ENCODE measurements at regions of chr5 and their contacts with region 1.

Region 1: GRCh38 chr5:102715082-102715819 is 39.9 kb upstream of the PAM start:
- DNase-seq: peak; percentile 77
- H3K4me3 ChIP-seq: no peak overlapping the region
- H3K27ac ChIP-seq: no peak overlapping the region
- H3K4me1 ChIP-seq: peaks cover 15% of the 10 kb centered on the region
- H3K27me3 ChIP-seq: no peaks in the 10 kb centered on the region
- CTCF ChIP-seq: no peak
- POLR2A ChIP-seq: no peak

Region 2: GRCh38 chr5:102731704-102732103 is 16.5 kb after region 1 on chr5:
- CTCF ChIA-PET with region 1: no interaction called
- POLR2A ChIA-PET with region 1: no interaction called
- dilution Hi-C with region 1: no loop called
- intact Hi-C with region 1: no loop called
- DNase-seq: no peak
- H3K4me3 ChIP-seq: no peak overlapping the region
- H3K27ac ChIP-seq: no peak overlapping the region
- H3K4me1 ChIP-seq: no peaks in the 10 kb centered on the region
- H3K27me3 ChIP-seq: no peaks in the 10 kb centered on the region
- CTCF ChIP-seq: no peak
- POLR2A ChIP-seq: no peak

Region 3: GRCh38 chr5:102755686-102756371 is 40.6 kb after region 1 on chr5:
- CTCF ChIA-PET with region 1: no interaction called
- POLR2A ChIA-PET with region 1: no interaction called
- dilution Hi-C with region 1: no loop called
- intact Hi-C with region 1: loop called (anchors 1 kb)
- DNase-seq: peak; percentile 78
- H3K4me3 ChIP-seq: peak overlapping the region; percentile 73 to 90 (median 86)
- H3K27ac ChIP-seq: peak overlapping the region; percentile 81
- H3K4me1 ChIP-seq: peaks cover 15% of the 10 kb centered on the region
- H3K27me3 ChIP-seq: no peaks in the 10 kb centered on the region
- CTCF ChIP-seq: no peak
- POLR2A ChIP-seq: no peak

Region 4: DNA sequence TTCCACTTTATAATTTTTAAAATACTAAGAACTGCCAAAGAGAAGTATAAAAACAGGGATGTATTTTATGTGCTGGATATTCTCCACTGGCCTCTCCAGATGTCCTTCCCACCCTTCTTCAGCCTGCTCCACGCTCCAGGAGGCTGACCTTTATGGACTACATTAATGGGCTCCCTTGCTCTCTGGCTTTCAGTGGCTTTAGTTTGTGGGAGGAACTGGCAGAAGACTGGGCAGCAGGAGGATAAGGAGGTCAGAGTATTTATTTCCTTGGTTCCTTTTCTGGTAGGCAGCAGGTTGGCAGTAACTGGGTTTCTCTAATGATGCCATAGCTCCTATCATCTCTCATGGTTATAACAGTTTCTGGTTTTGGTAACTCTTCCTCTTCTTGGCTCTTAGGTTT is 173.8 kb after region 1 on chr5:
- CTCF ChIA-PET with region 1: no interaction called
- POLR2A ChIA-PET with region 1: no interaction called
- dilution Hi-C with region 1: no loop called
- intact Hi-C with region 1: no loop called
- DNase-seq: no peak
- H3K4me3 ChIP-seq: no peak overlapping the region
- H3K27ac ChIP-seq: no peak overlapping the region
- H3K4me1 ChIP-seq: no peaks in the 10 kb centered on the region
- H3K27me3 ChIP-seq: no peaks in the 10 kb centered on the region
- CTCF ChIP-seq: no peak
- POLR2A ChIP-seq: no peak

Region 5: GRCh38 chr5:102911973-102912372 is 196.7 kb after region 1 on chr5:
- CTCF ChIA-PET with region 1: no interaction called
- POLR2A ChIA-PET with region 1: no interaction called
- dilution Hi-C with region 1: no loop called
- intact Hi-C with region 1: loop called (anchors 5 kb)
- DNase-seq: peak; percentile 89
- H3K4me3 ChIP-seq: no peak overlapping the region
- H3K27ac ChIP-seq: peak overlapping the region; percentile 63
- H3K4me1 ChIP-seq: peaks cover 29% of the 10 kb centered on the region
- H3K27me3 ChIP-seq: no peaks in the 10 kb centered on the region
- CTCF ChIP-seq: no peak
- POLR2A ChIP-seq: peak; percentile 48

Region 6: DNA sequence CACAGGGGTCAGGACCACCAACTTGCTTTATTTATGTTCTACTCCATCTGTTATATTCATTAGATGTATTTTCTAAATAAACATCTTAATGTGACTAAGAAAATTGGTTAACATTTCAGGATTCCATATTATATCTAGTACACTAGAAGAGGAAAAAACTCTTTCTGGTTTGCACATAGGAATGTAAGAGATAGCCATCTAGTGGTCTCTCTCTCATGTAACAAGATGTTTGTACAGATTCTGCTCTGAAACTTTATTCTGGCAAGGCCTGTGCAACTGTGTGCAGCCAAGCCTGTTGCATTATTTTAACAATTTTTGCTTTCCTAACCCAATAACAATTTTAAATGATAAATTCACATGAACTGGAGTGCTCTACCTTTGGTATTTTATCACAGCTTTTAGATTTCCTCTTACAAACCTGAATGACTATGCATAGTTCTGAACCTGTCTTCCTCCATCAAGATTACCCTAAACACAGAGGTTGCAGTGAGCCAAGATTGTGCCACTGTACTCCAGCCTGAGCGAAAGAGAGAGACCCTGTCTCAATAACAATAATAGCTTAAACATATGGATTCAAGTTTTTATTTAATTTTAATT is 256.5 kb after region 1 on chr5:
- CTCF ChIA-PET with region 1: no interaction called
- POLR2A ChIA-PET with region 1: no interaction called
- dilution Hi-C with region 1: no loop called
- intact Hi-C with region 1: loop called (anchors 10 kb)
- DNase-seq: peak; percentile 40
- H3K4me3 ChIP-seq: no peak overlapping the region
- H3K27ac ChIP-seq: no peak overlapping the region
- H3K4me1 ChIP-seq: peaks cover 28% of the 10 kb centered on the region
- H3K27me3 ChIP-seq: no peaks in the 10 kb centered on the region
- CTCF ChIP-seq: peak; percentile 27 to 29
- POLR2A ChIP-seq: no peak